ENCODE measurements at regions of chr12 and their contacts with region 1.

Region 1: DNA sequence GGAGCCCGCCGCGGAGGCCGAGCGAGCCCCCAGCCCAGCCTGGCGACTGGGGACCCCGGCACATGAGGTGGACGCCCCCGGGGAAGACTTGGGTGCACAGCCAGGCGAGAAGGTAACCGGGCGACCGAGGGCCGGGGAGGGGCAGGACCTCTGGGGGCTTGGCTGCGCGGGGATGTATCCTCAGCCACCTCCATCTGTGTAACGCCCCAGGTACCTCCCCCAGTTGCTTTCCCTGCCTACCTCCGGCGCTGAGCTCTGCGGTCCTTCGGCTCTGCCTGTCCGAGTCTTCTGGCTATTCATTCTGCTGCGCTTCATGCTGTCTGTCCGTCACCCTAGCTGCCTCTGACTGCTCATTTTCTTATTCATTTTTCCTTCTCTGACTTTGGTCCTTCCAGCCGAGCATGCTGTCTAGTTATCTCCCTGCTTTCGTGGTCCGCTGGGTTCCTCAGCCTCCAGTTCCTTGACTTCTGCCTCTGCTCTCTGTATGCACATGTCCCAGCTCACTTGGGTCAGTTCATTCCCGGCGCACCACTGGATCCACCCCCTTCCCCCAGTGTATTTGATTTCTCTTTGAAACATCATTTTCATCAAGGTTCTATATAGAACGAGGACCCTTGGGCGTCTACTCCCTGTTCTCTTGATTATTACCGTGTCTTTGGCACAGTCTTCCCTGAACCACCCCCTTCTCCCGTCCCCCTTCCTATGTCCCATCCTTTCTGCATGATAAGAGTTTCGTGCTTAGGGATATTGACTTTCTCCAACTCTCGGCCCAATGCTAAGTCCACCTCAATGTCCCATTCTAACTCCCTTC is 612 bp downstream of the PHC1 start:
- DNase-seq: peak; percentile 83
- H3K4me3 ChIP-seq: peak overlapping the region; percentile 74 to 89
- H3K27ac ChIP-seq: peak overlapping the region; percentile 83 to 95
- H3K4me1 ChIP-seq: peaks cover 15 to 16% of the 10 kb centered on the region in 2 experiments; a peak in 3 of 4 replicates
- H3K27me3 ChIP-seq: no peaks in the 10 kb centered on the region
- CTCF ChIP-seq: no peak
- EP300 ChIP-seq: no peak
- RAD21 ChIP-seq: no peak

Region 2: DNA sequence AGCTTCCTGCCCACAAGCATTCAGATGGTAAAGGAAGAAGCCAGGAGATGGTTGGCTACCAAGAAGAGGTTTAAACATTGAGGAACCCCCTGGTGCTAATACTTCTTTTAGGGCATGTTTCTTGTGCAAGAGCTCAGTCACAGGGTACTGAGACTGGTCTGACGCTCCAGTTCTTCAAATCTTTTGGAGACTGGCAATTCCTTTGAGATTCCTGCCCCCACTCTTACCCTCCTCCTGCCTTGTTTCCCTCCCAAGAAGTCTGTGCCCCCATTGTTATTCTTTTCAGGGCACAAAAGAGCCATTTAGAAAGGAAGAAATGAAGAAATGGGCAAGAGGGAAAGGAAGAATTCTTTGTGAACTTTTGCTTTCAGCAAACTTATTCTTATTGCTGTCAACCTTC is 80.7 kb before region 1 on chr12:
- CTCF ChIA-PET with region 1: no interaction called
- POLR2A ChIA-PET with region 1: no interaction called
- DNase-seq: no peak
- H3K4me3 ChIP-seq: no peak overlapping the region
- H3K27ac ChIP-seq: no peak overlapping the region
- H3K4me1 ChIP-seq: no peaks in the 10 kb centered on the region
- H3K27me3 ChIP-seq: no peaks in the 10 kb centered on the region; the same call in 1 of the 2 replicates
- CTCF ChIP-seq: no peak
- EP300 ChIP-seq: no peak
- RAD21 ChIP-seq: no peak

Region 3: DNA sequence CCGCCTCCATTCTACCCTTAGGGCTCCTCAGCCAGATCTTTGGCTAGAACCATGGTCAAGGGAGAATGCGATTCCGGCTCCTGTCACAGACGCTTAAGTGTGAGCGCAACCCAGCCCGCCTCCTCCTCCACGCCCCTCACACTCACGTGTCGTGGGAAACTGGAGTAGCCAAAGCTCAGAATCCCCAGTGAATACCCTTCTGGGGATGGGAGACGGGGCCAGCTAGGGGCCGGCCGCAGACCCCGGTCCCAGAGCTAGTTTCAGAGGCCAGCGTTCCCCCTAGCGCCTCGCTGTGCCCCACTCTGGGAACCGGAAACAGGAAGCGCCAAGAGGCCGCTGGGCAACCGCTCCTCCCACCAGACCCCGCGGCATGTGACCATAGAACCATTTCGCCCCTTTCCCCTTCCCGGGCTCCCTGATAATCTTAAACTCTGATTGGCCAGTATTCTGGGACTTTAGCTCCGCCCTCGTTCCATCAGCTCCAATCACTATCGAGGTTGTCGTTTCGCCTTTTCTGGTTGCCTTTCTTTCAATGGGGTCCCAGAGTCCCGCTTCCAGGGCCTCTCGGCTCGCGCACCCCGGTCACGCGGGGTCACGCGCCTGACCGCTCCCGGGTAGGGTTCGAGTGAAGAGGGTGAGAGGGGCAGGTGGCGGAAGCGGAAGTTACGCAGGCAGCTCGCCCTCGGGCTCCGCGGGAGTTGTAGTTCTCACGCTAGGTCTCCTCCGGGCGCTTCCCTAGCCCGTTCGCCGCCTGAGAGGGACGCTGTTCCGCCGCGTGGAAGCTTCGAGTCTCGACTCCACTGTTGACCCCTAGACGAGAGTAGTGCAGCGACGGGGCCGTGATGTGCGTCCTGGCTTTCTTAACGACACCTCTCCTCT is 34.7 kb after region 1 on chr12 and contains the start of gene M6PR:
- CTCF ChIA-PET with region 1: interaction called, 6 read pairs
- POLR2A ChIA-PET with region 1: interaction called, 19 read pairs
- DNase-seq: peak; percentile 90
- H3K4me3 ChIP-seq: peak within 1 kb of the TSS; percentile 97 to 99
- H3K27ac ChIP-seq: peak within 1 kb of the TSS; percentile 96 to 99
- H3K4me1 ChIP-seq: peaks cover 0 to 11% of the 10 kb centered on the region in 2 experiments; a peak in 3 of 4 replicates
- H3K27me3 ChIP-seq: no peaks in the 10 kb centered on the region
- CTCF ChIP-seq: peak; percentile 60
- EP300 ChIP-seq: no peak; a peak in 1 of 4 replicates
- RAD21 ChIP-seq: peak; percentile 55
- polyA plus RNA-seq, gene M6PR: 132 and 196 TPM in 2 replicates

Measured in SK-N-SH (cell line).